ENCODE measurements at regions of chr12 and their contacts with region 1.

Region 1: DNA sequence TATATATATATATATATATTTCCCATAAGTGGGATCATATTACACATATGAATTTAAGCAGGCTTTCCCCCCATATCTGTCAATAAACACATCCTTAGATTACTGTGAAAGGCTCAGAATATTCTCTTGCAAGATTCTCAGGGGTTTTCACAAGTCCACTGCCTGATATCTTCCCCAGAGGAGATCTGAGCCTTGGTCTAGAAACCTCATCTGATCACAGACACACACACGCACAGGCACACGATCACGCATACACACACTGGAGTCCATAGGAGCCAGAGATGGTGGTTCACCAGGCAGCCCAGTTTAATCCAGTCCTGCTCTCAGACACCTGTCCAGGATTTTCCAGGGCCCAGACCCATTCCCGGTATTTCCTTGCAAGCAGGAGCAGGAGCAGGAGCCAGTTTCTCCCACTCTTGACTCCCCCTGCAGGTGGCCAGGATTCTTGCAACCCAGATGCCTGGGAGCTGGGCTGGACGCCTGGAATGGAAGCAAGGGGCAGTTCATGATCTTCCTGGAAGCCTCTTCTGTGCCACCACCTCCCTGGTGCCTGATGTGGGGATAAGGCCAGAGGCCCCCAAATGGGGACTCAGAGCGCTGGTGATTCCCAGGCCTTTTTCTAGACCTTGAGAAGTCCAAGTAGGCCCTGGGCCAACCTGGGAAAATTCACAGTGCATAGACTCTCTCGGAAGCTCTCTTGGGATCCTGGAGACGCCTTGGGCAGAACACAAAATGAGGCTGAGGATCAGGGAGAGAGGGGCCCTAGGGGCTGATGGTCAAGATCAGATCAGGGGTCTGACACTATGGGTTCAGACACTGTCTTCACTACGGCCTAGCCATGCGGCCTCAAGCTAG is 16.5 kb upstream of the KRT78 start:
- DNase-seq: peak in 3 of 5 donors; percentile 41 to 67 (median 45)
- H3K4me3 ChIP-seq: no peak overlapping the region
- H3K27ac ChIP-seq: no peak overlapping the region
- H3K4me1 ChIP-seq: no peaks in the 10 kb centered on the region
- H3K27me3 ChIP-seq: no peaks in the 10 kb centered on the region
- CTCF ChIP-seq: peak in 1 of 3 donors; percentile 35
- EP300 ChIP-seq: no peak
- POLR2A ChIP-seq: no peak

Region 2: DNA sequence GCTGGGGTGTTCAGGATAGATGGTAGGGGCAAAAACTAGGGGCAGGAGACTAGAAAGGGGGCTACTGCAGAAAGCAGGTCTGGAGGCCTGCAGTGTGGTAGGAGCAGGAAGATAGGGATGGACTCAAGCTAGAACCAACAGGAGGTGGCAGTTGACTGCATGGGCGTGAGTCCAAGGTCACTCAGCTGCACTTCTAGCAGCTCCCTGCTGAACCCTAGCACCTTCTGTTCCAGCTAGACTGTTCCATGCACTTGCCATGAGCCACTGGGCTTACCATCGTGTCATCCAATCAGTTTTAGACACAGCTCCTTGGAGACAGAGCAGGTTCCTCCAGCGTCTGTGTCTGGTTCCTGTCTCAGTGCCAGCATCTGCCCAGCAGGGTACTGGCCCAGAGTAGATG is 50.9 kb after region 1 on chr12:
- intact Hi-C with region 1: loop called in 1 of 4 experiments (anchors 1 kb)
- DNase-seq: no peak
- H3K4me3 ChIP-seq: no peak overlapping the region
- H3K27ac ChIP-seq: no peak overlapping the region
- H3K4me1 ChIP-seq: no peaks in the 10 kb centered on the region
- H3K27me3 ChIP-seq: no peaks in the 10 kb centered on the region
- CTCF ChIP-seq: no peak
- EP300 ChIP-seq: no peak
- POLR2A ChIP-seq: no peak

Measured in ovary (tissue), 10 donors.